ENCODE measurements at regions of chr1 and their contacts with region 1.

Region 1: DNA sequence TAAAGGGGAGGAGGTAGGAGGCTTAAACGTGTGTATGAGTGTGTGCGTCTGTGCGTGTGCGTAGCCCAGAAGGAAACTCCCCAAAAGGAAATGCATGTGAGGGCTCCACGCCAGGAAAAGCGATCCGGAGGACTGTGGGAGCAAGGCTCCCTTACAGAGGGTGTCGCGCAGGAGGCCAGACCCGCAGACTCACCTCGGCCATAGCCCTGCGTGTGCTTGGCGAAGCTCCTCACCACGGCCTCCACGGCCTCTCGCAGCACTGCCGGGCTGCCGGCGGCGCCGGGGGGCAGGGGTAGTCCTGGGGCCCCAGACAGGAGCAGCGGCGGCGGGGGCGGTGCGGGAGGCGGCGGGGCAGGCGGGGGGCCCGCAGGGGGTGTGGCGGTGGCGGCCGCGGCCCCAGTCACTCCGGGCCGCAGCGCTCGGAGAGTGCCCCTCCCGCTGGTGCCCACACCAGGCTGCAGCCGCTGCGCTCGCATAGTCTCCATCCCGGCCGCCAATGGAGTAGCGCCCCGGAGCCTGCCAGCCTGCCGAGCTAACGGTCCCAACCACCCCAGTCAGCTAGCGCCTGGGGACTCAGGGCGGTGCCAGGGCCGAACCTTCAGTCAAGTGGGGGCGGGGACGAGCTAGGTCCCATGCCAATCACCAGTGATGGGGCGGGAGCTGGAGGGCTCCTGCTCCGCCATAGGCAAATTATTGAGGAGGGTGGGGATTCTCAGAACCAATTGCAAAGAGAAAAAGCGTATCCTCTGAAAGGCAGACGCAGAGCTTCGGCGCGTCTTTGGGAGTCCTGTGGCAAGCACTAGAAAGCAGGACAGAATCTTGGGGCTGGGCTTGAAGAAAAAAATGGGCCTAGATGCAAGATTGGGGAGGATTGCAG is at the start of gene LIX1L:
- DNase-seq: peak; percentile 87 to 98 (median 93)
- ATAC-seq: peak; percentile 86
- H3K4me3 ChIP-seq: peak within 1 kb of the TSS; percentile 83
- H3K4me3 Mint-ChIP-seq: peak within 1 kb of the TSS; percentile 96
- H3K27ac ChIP-seq: peak within 1 kb of the TSS; percentile 75 to 76
- H3K27ac Mint-ChIP-seq: peak within 1 kb of the TSS; percentile 87
- H3K4me1 ChIP-seq: peaks cover 66% of the 10 kb centered on the region
- H3K4me1 Mint-ChIP-seq: peaks cover 76% of the 10 kb centered on the region
- H3K27me3 ChIP-seq: no peaks in the 10 kb centered on the region
- H3K27me3 Mint-ChIP-seq: no peaks in the 10 kb centered on the region
- CTCF ChIP-seq: no peak
- total RNA-seq, gene LIX1L: 21.4 to 21.5 TPM

Region 2: DNA sequence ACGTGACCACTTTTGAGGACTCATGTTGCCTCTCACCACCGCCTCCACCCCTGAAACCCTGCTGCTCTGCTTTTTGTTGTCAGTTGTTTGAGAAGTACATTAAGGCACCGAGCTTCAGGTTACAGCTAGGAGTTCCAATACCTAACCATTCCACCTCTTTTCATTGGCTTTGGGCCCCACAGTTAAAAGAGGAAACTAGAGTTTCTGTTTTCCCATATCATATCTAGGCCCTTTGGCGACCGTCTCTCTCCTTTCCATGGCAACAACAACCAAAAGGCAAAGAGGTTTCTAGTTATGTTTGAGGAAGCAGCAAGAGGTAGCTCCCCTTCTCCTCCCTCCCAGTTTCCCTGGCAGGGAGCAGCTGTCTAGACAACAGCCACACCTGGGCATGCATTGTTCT is 77.9 kb before region 1 on chr1:
- CTCF ChIA-PET with region 1: no interaction called
- POLR2A ChIA-PET with region 1: no interaction called
- intact Hi-C with region 1: no loop called
- DNase-seq: no peak
- ATAC-seq: no peak
- H3K4me3 ChIP-seq: no peak overlapping the region
- H3K4me3 Mint-ChIP-seq: no peak overlapping the region
- H3K27ac ChIP-seq: no peak overlapping the region
- H3K27ac Mint-ChIP-seq: no peak overlapping the region
- H3K4me1 ChIP-seq: no peaks in the 10 kb centered on the region
- H3K4me1 Mint-ChIP-seq: peaks cover 4% of the 10 kb centered on the region
- H3K27me3 ChIP-seq: peaks cover 13 to 18% of the 10 kb centered on the region in 2 experiments
- H3K27me3 Mint-ChIP-seq: peaks cover 25% of the 10 kb centered on the region
- CTCF ChIP-seq: no peak

Region 3: DNA sequence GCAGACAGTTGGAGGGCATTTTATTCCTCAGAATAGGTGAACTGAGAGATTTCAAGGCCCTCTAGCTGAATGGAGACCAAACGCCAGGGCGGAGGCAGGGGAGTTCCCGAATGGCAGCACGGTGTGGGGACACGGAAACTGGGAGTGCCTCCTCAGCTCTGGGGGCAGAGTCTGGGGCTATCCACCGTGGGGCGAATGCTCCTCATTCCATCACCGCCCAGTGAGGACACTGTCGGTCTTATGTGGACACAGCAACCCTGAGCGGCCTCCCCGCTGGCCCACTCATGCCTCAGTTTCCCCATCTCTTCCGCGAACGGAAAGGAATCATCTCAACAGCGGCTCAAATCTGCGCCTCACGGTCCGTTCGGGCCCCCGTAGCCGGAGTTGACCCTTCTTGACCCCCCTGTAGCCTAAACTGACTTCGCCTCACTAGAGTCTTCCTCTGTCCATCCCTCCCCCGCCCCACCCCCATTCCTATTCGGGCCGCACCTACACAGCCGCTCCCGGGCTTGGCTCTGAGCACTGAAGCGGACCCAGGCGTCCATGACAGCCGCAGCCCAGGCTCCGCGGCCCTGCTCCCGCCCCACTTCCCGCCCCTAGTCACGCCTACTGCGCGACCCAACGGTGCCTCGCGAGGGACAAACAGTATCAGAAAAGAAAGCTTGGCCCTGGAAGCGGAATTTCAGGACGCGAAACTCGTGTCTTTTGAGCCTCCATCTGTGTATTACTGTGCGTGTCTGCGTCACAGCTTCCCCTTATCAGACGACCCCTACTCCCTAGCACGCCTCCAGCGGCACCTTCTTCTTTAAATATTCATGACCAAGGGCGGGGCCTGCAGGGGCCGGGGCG is 39.3 kb before region 1 on chr1 and contains the start of gene PEX11B:
- CTCF ChIA-PET with region 1: no interaction called
- POLR2A ChIA-PET with region 1: interaction called, 61 read pairs
- intact Hi-C with region 1: loop called (anchors 5 kb)
- DNase-seq: peak; percentile 87 to 96 (median 92)
- ATAC-seq: peak; percentile 90
- H3K4me3 ChIP-seq: peak within 1 kb of the TSS; percentile 87
- H3K4me3 Mint-ChIP-seq: peak within 1 kb of the TSS; percentile 94
- H3K27ac ChIP-seq: peak within 1 kb of the TSS; percentile 52 to 60
- H3K27ac Mint-ChIP-seq: peak within 1 kb of the TSS; percentile 92
- H3K4me1 ChIP-seq: peaks cover 31% of the 10 kb centered on the region
- H3K4me1 Mint-ChIP-seq: peaks cover 47% of the 10 kb centered on the region
- H3K27me3 ChIP-seq: no peaks in the 10 kb centered on the region
- H3K27me3 Mint-ChIP-seq: no peaks in the 10 kb centered on the region
- CTCF ChIP-seq: no peak
- total RNA-seq, gene PEX11B: 11.6 to 13.2 TPM

Region 4: GRCh38 chr1:145936247-145936646 is 21.4 kb before region 1 on chr1:
- CTCF ChIA-PET with region 1: no interaction called
- POLR2A ChIA-PET with region 1: interaction called, 22 read pairs
- intact Hi-C with region 1: loop called in 1 of 2 experiments (anchors 2 kb)
- DNase-seq: no peak
- ATAC-seq: no peak
- H3K4me3 ChIP-seq: no peak overlapping the region
- H3K4me3 Mint-ChIP-seq: no peak overlapping the region
- H3K27ac ChIP-seq: no peak overlapping the region
- H3K27ac Mint-ChIP-seq: no peak overlapping the region
- H3K4me1 ChIP-seq: peaks cover 20% of the 10 kb centered on the region
- H3K4me1 Mint-ChIP-seq: peaks cover 25% of the 10 kb centered on the region
- H3K27me3 ChIP-seq: no peaks in the 10 kb centered on the region
- H3K27me3 Mint-ChIP-seq: no peaks in the 10 kb centered on the region
- CTCF ChIP-seq: no peak

Region 5: DNA sequence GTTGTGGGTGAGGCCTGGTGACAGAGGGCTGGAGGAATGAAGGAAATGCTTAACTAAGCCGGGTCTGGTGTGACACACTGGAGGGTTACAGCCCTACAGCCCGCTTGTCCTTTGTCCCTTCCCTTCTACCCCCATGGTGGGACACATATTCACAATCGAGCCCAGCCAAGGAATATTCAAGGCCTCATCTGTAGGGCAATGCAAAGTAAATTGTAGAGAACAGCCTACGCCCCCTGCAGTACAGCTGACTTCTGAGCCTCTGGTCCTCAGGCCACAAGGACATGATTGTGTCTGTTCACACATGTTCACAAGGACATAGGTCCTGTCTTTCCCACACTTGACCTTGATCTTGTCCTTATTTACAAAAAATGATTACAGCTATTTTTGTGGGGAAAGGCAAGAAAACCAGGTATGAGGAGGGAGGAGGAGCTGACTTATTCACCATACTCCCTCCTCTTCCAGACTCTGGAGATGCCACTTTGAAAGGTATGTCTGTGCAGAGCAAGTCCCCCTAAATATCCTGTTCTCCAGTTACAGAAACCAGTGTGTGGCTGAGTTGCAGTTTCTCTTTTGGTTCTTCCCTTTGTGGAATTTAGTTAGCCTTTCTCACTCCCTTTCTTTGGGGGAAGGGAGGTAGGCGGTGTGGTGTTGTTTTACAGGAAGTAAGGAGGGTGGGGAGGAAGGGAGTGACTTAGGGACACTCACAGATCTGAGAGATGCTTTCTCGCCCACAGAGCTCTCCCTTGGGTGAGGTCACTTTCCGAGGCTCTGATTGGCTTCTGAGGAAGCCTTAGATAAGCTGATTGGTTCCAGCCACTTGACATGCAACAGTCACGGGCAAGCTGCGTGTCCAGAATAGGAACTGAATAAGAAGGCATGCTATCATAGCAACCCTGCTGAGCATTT is 21.4 kb after region 1 on chr1:
- CTCF ChIA-PET with region 1: interaction called, 11 read pairs
- POLR2A ChIA-PET with region 1: interaction called, 74 read pairs
- intact Hi-C with region 1: no loop called
- DNase-seq: peak in 13 of 14 experiments; percentile 45 to 97 (median 66)
- ATAC-seq: peak; percentile 69
- H3K4me3 ChIP-seq: peak overlapping the region; percentile 45
- H3K4me3 Mint-ChIP-seq: no peak overlapping the region
- H3K27ac ChIP-seq: peak overlapping the region; percentile 93 to 94
- H3K27ac Mint-ChIP-seq: no peak overlapping the region
- H3K4me1 ChIP-seq: peaks cover 69% of the 10 kb centered on the region
- H3K4me1 Mint-ChIP-seq: peaks cover 6% of the 10 kb centered on the region
- H3K27me3 ChIP-seq: no peaks in the 10 kb centered on the region
- H3K27me3 Mint-ChIP-seq: no peaks in the 10 kb centered on the region
- CTCF ChIP-seq: peak; percentile 28

Region 6: DNA sequence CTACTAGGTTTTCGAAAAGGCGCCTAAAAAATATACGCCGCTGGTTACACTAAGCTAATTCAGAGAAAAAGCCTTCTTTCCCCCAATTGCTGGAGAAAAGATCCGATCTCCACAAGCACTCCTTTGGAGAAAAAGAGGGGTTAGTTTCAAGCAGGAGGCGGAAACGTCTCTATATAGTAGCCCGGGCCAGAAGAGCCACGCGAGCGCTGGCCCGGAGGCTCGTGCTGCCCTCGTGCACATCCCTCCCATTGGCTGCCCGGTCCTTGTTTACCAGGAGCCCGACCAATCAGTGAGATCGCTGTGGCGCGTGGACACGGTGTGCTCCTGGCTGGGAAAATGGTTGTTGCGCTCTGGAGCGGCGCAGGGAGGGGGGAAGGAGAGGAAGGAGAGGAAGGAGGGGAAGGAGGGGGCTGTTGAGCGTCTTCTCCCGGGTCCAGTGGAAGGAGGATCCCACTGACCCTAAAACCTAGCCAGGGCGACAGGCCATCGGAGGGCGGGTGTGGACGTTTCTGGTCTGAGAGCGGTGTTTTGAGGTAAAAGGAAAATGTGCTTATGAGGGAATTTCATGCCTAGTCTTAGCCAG is 38.8 kb after region 1 on chr1 and contains the start of gene TXNIP:
- CTCF ChIA-PET with region 1: no interaction called
- POLR2A ChIA-PET with region 1: interaction called, 115 read pairs
- intact Hi-C with region 1: loop called in 1 of 2 experiments (anchors 5 kb)
- DNase-seq: peak; percentile 70 to 98 (median 91)
- ATAC-seq: peak; percentile 72
- H3K4me3 ChIP-seq: peak within 1 kb of the TSS; percentile 61
- H3K4me3 Mint-ChIP-seq: peak within 1 kb of the TSS; percentile 95
- H3K27ac ChIP-seq: peak within 1 kb of the TSS; percentile 91 to 92
- H3K27ac Mint-ChIP-seq: peak within 1 kb of the TSS; percentile 95
- H3K4me1 ChIP-seq: peaks cover 57% of the 10 kb centered on the region
- H3K4me1 Mint-ChIP-seq: peaks cover 71% of the 10 kb centered on the region
- H3K27me3 ChIP-seq: no peaks in the 10 kb centered on the region
- H3K27me3 Mint-ChIP-seq: no peaks in the 10 kb centered on the region
- CTCF ChIP-seq: no peak
- total RNA-seq, gene TXNIP: 1,317 to 1,358 TPM

Region 7: DNA sequence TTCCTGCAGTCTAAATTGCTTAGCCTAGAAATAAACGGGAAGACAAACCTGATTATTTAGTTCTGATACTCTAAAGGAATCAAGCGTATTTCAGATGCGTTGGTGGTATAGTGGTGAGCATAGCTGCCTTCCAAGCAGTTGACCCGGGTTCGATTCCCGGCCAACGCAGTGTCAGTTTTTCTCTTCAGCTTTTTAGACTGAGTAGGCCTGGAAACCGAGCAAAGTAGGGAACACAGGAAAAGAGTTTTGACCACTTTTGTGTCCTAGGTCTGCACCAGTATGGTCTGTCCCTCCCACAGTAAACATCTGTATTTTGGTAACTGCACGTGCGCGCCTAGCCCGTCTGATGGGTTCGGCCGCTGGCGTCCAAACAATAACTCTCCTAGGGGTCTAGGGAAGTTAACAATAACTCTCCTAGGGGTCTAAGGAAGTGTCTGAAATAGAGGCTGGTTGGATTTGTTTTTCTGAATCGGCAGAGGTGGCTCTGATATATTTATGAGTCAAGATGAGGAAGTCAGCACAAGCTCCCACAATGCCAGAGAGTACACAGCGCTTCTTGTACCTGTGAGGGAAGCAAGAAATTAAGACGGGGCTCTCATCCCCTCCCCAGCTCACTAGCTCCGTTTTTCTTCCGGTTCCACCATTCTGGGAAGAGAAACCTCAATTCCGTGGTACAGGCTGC is 79.4 kb after region 1 on chr1:
- CTCF ChIA-PET with region 1: no interaction called
- POLR2A ChIA-PET with region 1: interaction called, 62 read pairs
- intact Hi-C with region 1: no loop called
- DNase-seq: peak; percentile 50 to 88 (median 68)
- ATAC-seq: peak; percentile 59
- H3K4me3 ChIP-seq: peak overlapping the region; percentile 83
- H3K4me3 Mint-ChIP-seq: peak overlapping the region; percentile 98
- H3K27ac ChIP-seq: peak overlapping the region; percentile 58 to 83
- H3K27ac Mint-ChIP-seq: peak overlapping the region; percentile 100
- H3K4me1 ChIP-seq: peaks cover 38% of the 10 kb centered on the region
- H3K4me1 Mint-ChIP-seq: peaks cover 45% of the 10 kb centered on the region
- H3K27me3 ChIP-seq: no peaks in the 10 kb centered on the region
- H3K27me3 Mint-ChIP-seq: peaks cover 40% of the 10 kb centered on the region
- CTCF ChIP-seq: no peak